ENCODE measurements at regions of chr7 and their contacts with region 1.

Region 1: DNA sequence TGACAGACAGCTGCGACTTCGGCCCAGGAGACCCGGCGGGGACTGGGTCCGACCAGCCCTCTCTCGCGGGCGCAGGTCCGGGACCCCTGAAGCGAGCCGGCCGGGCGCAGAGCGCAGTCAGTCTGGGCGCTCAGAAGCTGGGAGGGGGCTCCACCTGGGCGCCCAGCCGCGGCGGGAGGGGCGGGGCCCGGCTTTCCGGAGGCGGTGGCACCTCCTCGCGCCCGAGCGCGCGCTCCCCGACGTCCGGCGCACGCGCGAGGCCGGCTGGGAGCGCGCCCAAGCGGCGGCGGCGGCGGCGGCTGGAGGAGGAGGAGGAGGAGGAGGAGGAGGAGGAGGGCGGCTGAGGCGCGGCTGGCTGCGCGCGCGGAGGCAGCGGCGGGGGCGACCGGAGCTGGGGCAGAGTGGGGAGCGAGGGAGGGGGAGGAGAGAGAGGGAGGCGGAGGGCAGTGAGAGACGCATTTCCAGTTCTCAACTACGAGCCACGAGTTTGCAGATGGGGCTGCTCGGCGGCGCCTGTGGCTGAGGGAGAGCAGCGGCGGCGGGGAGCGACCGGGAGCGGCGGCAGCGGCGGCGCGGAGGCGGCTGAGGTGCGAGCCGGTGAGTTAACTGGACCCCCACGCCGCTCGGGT is at the start of gene PALS2:
- DNase-seq: peak; percentile 71 to 91 (median 82)
- ATAC-seq: peak; percentile 82
- H3K4me3 ChIP-seq: peak within 1 kb of the TSS; percentile 81 to 88
- H3K4me3 Mint-ChIP-seq: peak within 1 kb of the TSS; percentile 94
- H3K27ac ChIP-seq: peak within 1 kb of the TSS; percentile 69 to 77
- H3K27ac Mint-ChIP-seq: peak within 1 kb of the TSS; percentile 92
- H3K4me1 ChIP-seq: peaks cover 31% of the 10 kb centered on the region
- H3K4me1 Mint-ChIP-seq: peaks cover 42% of the 10 kb centered on the region
- H3K27me3 ChIP-seq: no peaks in the 10 kb centered on the region
- H3K27me3 Mint-ChIP-seq: peaks cover 5% of the 10 kb centered on the region
- CTCF ChIP-seq: no peak
- total RNA-seq, gene PALS2: 31.7 to 32.8 TPM

Region 2: GRCh38 chr7:23273141-23273599 is 1299.9 kb before region 1 on chr7:
- CTCF ChIA-PET with region 1: no interaction called
- POLR2A ChIA-PET with region 1: no interaction called
- intact Hi-C with region 1: loop called in 1 of 2 experiments (anchors 10 kb)
- DNase-seq: peak; percentile 78 to 91 (median 89)
- ATAC-seq: peak; percentile 97
- H3K4me3 ChIP-seq: peak overlapping the region in 1 of 2 experiments; percentile 16
- H3K4me3 Mint-ChIP-seq: peak overlapping the region; percentile 70
- H3K27ac ChIP-seq: no peak overlapping the region
- H3K27ac Mint-ChIP-seq: no peak overlapping the region
- H3K4me1 ChIP-seq: no peaks in the 10 kb centered on the region
- H3K4me1 Mint-ChIP-seq: peaks cover 4% of the 10 kb centered on the region
- H3K27me3 ChIP-seq: no peaks in the 10 kb centered on the region
- H3K27me3 Mint-ChIP-seq: peaks cover 6% of the 10 kb centered on the region
- CTCF ChIP-seq: peak; percentile 82

Region 3: GRCh38 chr7:23679898-23680413 is 893.2 kb before region 1 on chr7 and contains the start of gene FAM221A:
- CTCF ChIA-PET with region 1: no interaction called
- POLR2A ChIA-PET with region 1: no interaction called
- intact Hi-C with region 1: loop called (anchors 5 kb)
- DNase-seq: peak; percentile 55 to 90 (median 80)
- ATAC-seq: peak; percentile 97
- H3K4me3 ChIP-seq: peak within 1 kb of the TSS; percentile 49 to 71
- H3K4me3 Mint-ChIP-seq: peak within 1 kb of the TSS; percentile 96
- H3K27ac ChIP-seq: peak within 1 kb of the TSS; percentile 3 to 18
- H3K27ac Mint-ChIP-seq: peak within 1 kb of the TSS; percentile 79
- H3K4me1 ChIP-seq: peaks cover 3% of the 10 kb centered on the region
- H3K4me1 Mint-ChIP-seq: peaks cover 18% of the 10 kb centered on the region
- H3K27me3 ChIP-seq: no peaks in the 10 kb centered on the region
- H3K27me3 Mint-ChIP-seq: no peaks in the 10 kb centered on the region
- CTCF ChIP-seq: peak; percentile 73
- total RNA-seq, gene FAM221A: 2.4 to 3.0 TPM

Region 4: GRCh38 chr7:24609059-24609458 is 35.9 kb after region 1 on chr7:
- CTCF ChIA-PET with region 1: no interaction called
- POLR2A ChIA-PET with region 1: no interaction called
- intact Hi-C with region 1: no loop called
- DNase-seq: no peak
- ATAC-seq: no peak
- H3K4me3 ChIP-seq: no peak overlapping the region
- H3K4me3 Mint-ChIP-seq: no peak overlapping the region
- H3K27ac ChIP-seq: no peak overlapping the region
- H3K27ac Mint-ChIP-seq: no peak overlapping the region
- H3K4me1 ChIP-seq: no peaks in the 10 kb centered on the region
- H3K4me1 Mint-ChIP-seq: peaks cover 20% of the 10 kb centered on the region
- H3K27me3 ChIP-seq: no peaks in the 10 kb centered on the region
- H3K27me3 Mint-ChIP-seq: no peaks in the 10 kb centered on the region
- CTCF ChIP-seq: no peak

Region 5: GRCh38 chr7:24660546-24660945 is 87.4 kb after region 1 on chr7:
- CTCF ChIA-PET with region 1: interaction called, 4 read pairs
- POLR2A ChIA-PET with region 1: no interaction called
- intact Hi-C with region 1: loop called in 1 of 2 experiments (anchors 5 kb)
- DNase-seq: no peak
- ATAC-seq: no peak
- H3K4me3 ChIP-seq: no peak overlapping the region
- H3K4me3 Mint-ChIP-seq: no peak overlapping the region
- H3K27ac ChIP-seq: no peak overlapping the region
- H3K27ac Mint-ChIP-seq: no peak overlapping the region
- H3K4me1 ChIP-seq: no peaks in the 10 kb centered on the region
- H3K4me1 Mint-ChIP-seq: no peaks in the 10 kb centered on the region
- H3K27me3 ChIP-seq: no peaks in the 10 kb centered on the region
- H3K27me3 Mint-ChIP-seq: no peaks in the 10 kb centered on the region
- CTCF ChIP-seq: no peak

Region 6: GRCh38 chr7:24979863-24980533 is 406.9 kb after region 1 on chr7 and contains the start of gene OSBPL3:
- CTCF ChIA-PET with region 1: no interaction called
- POLR2A ChIA-PET with region 1: no interaction called
- intact Hi-C with region 1: loop called in 1 of 2 experiments (anchors 5 kb)
- DNase-seq: peak; percentile 91 to 97 (median 95)
- ATAC-seq: peak; percentile 87
- H3K4me3 ChIP-seq: peak within 1 kb of the TSS; percentile 82 to 96
- H3K4me3 Mint-ChIP-seq: peak within 1 kb of the TSS; percentile 97
- H3K27ac ChIP-seq: peak within 1 kb of the TSS; percentile 59 to 85
- H3K27ac Mint-ChIP-seq: peak within 1 kb of the TSS; percentile 81
- H3K4me1 ChIP-seq: peaks cover 34% of the 10 kb centered on the region
- H3K4me1 Mint-ChIP-seq: peaks cover 54% of the 10 kb centered on the region
- H3K27me3 ChIP-seq: no peaks in the 10 kb centered on the region
- H3K27me3 Mint-ChIP-seq: no peaks in the 10 kb centered on the region
- CTCF ChIP-seq: peak; percentile 20
- total RNA-seq, gene OSBPL3: 12.0 to 13.8 TPM

Region 7: GRCh38 chr7:25179771-25180591 is 606.9 kb after region 1 on chr7:
- CTCF ChIA-PET with region 1: no interaction called
- POLR2A ChIA-PET with region 1: no interaction called
- intact Hi-C with region 1: loop called in 1 of 2 experiments (anchors 2 kb)
- DNase-seq: peak; percentile 92 to 99 (median 95)
- ATAC-seq: peak; percentile 98
- H3K4me3 ChIP-seq: peak overlapping the region; percentile 64 to 70
- H3K4me3 Mint-ChIP-seq: peak overlapping the region; percentile 91
- H3K27ac ChIP-seq: peak overlapping the region; percentile 57 to 83
- H3K27ac Mint-ChIP-seq: peak overlapping the region; percentile 92
- H3K4me1 ChIP-seq: peaks cover 7% of the 10 kb centered on the region
- H3K4me1 Mint-ChIP-seq: peaks cover 22% of the 10 kb centered on the region
- H3K27me3 ChIP-seq: no peaks in the 10 kb centered on the region
- H3K27me3 Mint-ChIP-seq: peaks cover under 1% of the 10 kb centered on the region
- CTCF ChIP-seq: peak; percentile 91